ENCODE measurements at regions of chr11 and their contacts with region 1.

Region 1: GRCh38 chr11:119018074-119018938 is at the starts of genes RPS25 and TRAPPC4:
- DNase-seq: peak; percentile 93
- H3K4me3 Mint-ChIP-seq: peak within 1 kb of the TSS; percentile 99
- H3K27ac Mint-ChIP-seq: peak within 1 kb of the TSS; percentile 100
- H3K4me1 Mint-ChIP-seq: peaks cover 25% of the 10 kb centered on the region
- H3K27me3 Mint-ChIP-seq: no peaks in the 10 kb centered on the region
- total RNA-seq, gene RPS25: 1,728 and 1,773 TPM in 2 replicates
- total RNA-seq, gene TRAPPC4: 121 and 128 TPM in 2 replicates

Region 2: DNA sequence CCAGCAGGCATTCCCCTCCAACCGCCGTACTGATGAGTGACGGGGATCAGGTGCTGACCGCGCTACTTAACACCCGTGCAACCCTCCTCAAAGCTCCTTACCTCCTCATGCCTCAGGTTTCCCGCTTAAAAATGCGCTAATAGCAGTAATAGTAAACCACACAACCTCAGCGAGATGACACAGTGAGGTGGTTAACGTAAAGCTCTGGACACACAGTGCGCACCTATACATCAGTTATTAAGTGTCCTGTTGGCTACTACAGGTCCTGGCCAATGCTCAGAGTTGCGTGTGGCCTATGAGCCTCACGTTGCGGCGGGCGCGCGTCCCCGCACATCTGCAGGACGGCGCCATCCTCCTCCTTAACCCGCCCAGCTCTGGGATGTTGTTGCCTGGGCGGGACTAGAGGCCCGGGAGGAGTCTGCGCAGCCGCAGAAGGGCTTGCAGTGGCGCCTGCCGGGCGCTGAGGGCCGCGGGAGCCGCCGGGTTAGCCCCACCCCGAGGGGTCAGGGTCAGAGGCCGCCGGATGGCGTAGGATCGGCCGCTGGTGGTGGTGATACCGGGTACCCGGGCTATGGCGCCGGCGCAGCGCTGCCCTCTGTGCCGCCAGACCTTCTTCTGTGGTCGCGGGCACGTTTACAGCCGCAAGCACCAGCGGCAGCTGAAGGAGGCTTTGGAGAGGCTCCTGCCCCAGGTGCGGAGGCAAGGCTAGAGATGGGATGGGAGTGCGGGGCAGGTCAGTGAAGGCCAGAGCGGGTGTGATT is 20.5 kb before region 1 on chr11 and contains the start of gene CENATAC:
- intact Hi-C with region 1: loop called (anchors 1 kb)
- DNase-seq: peak; percentile 95
- H3K4me3 Mint-ChIP-seq: peak within 1 kb of the TSS; percentile 99
- H3K27ac Mint-ChIP-seq: peak within 1 kb of the TSS; percentile 98
- H3K4me1 Mint-ChIP-seq: peaks cover 21% of the 10 kb centered on the region
- H3K27me3 Mint-ChIP-seq: no peaks in the 10 kb centered on the region
- total RNA-seq, gene CENATAC: 44.2 and 47.7 TPM in 2 replicates

Region 3: GRCh38 chr11:119030329-119031049 is 12.2 kb after region 1 on chr11 and contains the start of gene SLC37A4:
- intact Hi-C with region 1: loop called (anchors 1 kb)
- DNase-seq: peak; percentile 98
- H3K4me3 Mint-ChIP-seq: peak within 1 kb of the TSS; percentile 75
- H3K27ac Mint-ChIP-seq: peak within 1 kb of the TSS; percentile 65
- H3K4me1 Mint-ChIP-seq: peaks cover 15% of the 10 kb centered on the region
- H3K27me3 Mint-ChIP-seq: no peaks in the 10 kb centered on the region
- total RNA-seq, gene SLC37A4: 31.7 and 34.4 TPM in 2 replicates

Region 4: GRCh38 chr11:119084663-119085436 is 66.5 kb after region 1 on chr11 and contains the start of gene HMBS:
- intact Hi-C with region 1: loop called (anchors 2 kb)
- DNase-seq: peak; percentile 91
- H3K4me3 Mint-ChIP-seq: peak within 1 kb of the TSS; percentile 96
- H3K27ac Mint-ChIP-seq: peak within 1 kb of the TSS; percentile 93
- H3K4me1 Mint-ChIP-seq: peaks cover 29% of the 10 kb centered on the region
- H3K27me3 Mint-ChIP-seq: no peaks in the 10 kb centered on the region
- total RNA-seq, gene HMBS: 57.4 and 59.0 TPM in 2 replicates

Measured in activated T-helper 2 cell treated with anti-CD3 and anti-CD28 coated beads, Interferon-gamma antibody, Interleukin-2, Interleukin-4, amounts not matched to agents 10 μg/mL and 5 μg/mL and 100 μg/mL, durations not matched to agents 14 hours and 24 hours and 36 hours (primary cell).